Heart left ventricle (tissue), 16 donors: ENCODE measurements at regions of chr2 and their contacts with region 1.

Region 1: DNA sequence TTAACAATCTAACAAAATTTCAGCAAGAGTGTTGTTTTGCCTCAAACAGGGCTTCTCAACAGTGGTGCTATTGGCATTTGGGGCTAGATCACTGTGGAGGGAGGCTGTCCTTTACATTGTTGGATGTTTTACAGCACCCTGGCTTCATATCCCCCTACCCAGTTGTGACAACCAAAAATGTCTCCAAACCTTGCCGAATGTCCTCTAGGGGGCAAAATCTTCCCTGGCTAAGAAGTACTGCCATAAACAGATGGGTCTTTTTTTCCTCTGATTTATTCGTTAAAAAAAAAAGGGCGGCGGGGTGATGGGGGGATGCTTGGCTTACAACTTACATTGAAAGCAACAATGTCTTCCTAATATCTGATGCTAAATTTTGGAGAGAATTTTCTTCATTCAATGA is 207.6 kb upstream of the CCDC150 start:
- DNase-seq: no peak
- ATAC-seq: no peak
- H3K4me3 ChIP-seq: no peak overlapping the region
- H3K27ac ChIP-seq: no peak overlapping the region
- H3K4me1 ChIP-seq: peaks cover 0 to 43% (median 18%) of the 10 kb centered on the region in 12 donors
- H3K27me3 ChIP-seq: no peaks in the 10 kb centered on the region
- CTCF ChIP-seq: peak in 7 of 12 donors; percentile 9 to 30 (median 19)
- POLR2A ChIP-seq: no peak

Region 2: GRCh38 chr2:196356332-196356731 is 75.6 kb before region 1 on chr2:
- intact Hi-C with region 1: loop called in 3 of 10 experiments (anchors 5 to 10 kb)
- DNase-seq: no peak
- ATAC-seq: no peak
- H3K4me3 ChIP-seq: peak overlapping the region in 9 of 12 donors; percentile 5 to 58 (median 28)
- H3K27ac ChIP-seq: no peak overlapping the region
- H3K4me1 ChIP-seq: peaks cover 0 to 22% (median 6%) of the 10 kb centered on the region in 12 donors
- H3K27me3 ChIP-seq: no peaks in the 10 kb centered on the region
- CTCF ChIP-seq: no peak
- POLR2A ChIP-seq: no peak

Region 3: DNA sequence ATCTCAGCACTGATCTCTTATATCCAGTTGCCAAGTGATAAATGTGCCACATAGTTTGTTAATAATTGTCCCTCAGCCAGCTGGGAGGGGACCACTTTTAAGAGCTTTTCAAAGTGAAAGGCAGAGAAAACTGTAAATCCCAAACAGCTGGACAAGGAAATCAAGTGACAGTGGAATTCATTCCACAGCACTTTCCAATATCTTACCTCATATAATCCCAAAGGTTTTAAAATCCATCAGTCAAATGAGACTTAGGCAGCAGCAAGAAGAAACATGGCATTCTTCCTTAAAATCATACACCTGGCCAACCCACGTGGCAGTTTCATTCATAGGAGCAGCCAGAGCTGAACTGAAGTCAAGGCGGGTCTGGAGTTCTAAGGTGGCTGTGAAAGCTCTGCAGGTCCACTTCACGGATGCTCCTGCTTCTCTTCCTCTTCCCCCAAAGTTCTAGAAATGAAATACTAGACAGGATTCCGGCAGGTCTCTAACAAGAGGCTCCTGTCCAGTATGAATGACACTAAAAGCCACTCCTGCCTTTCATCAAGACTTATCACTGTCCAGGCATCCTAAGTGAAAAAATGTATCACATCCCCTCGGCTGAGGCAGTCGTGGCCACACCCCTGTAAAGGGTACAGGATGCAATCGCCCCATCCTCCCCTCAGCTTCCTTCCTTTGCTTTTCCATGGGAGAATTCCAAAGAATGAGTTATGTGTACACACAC is 70.2 kb before region 1 on chr2:
- intact Hi-C with region 1: loop called in 3 of 10 experiments (anchors 5 to 10 kb)
- DNase-seq: peak in 3 of 5 donors; percentile 33 to 44 (median 33)
- ATAC-seq: peak; percentile 22 to 78 (median 76)
- H3K4me3 ChIP-seq: peak overlapping the region; percentile 6 to 58 (median 48)
- H3K27ac ChIP-seq: peak overlapping the region; percentile 19 to 76 (median 54)
- H3K4me1 ChIP-seq: peaks cover 0 to 34% (median 11%) of the 10 kb centered on the region in 12 donors
- H3K27me3 ChIP-seq: no peaks in the 10 kb centered on the region
- CTCF ChIP-seq: no peak
- POLR2A ChIP-seq: peak in 1 of 2 donors; percentile 28

Region 4: DNA sequence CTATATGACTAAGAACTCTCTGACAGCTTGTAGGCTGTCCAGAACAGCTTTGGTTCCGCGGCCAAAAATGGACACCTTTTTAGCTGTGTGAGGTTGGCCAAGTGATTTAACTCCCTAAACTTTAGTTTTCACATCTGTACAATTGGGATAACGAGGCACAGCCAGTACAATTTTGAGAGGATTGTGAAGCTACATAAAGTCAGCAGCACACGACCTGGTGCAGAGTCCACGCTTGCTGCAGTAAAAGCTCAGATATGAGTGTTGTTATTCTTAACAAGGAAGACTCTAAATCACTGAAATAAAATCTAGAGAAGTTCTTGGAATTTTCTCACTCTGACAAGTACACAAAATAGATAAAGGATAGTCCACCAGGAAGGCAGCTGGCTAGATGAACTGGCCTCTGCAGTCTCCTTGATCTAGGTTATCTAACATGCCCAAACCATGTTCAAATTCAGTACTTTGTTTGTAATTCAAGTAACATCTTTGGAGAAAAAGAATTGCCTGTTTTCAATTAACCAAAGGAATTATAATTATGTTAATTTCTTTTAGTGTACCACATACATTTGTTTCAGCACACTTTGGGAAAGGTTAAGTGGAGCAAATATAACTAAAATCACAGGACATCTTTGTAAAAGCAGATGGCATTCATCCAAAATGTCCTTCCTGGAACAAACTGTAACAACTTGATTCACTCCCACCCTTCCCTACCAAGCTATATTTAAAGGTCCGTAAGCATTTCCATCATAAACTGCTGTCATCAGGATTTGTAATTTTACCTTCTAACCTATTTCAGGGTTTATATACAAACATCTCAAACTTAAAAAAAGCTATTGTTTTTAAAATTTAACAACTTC is 58.9 kb before region 1 on chr2:
- intact Hi-C with region 1: loop called in 2 of 10 experiments (anchors 5 to 10 kb)
- DNase-seq: no peak
- ATAC-seq: peak; percentile 55 to 85 (median 77)
- H3K4me3 ChIP-seq: peak overlapping the region in 2 of 12 donors; percentile 9 to 14
- H3K27ac ChIP-seq: peak overlapping the region; percentile 28 to 86 (median 58)
- H3K4me1 ChIP-seq: peaks cover 6 to 31% (median 15%) of the 10 kb centered on the region in 12 donors
- H3K27me3 ChIP-seq: no peaks in the 10 kb centered on the region
- CTCF ChIP-seq: no peak
- POLR2A ChIP-seq: no peak